ENCODE measurements at regions of chr6 and their contacts with region 1.

Region 1: GRCh38 chr6:39309942-39310531 is 4.2 kb downstream of the KCNK17 start:
- DNase-seq: peak; percentile 75
- H3K4me3 Mint-ChIP-seq: no peak overlapping the region
- H3K27ac Mint-ChIP-seq: no peak overlapping the region
- H3K4me1 Mint-ChIP-seq: peaks cover 7% of the 10 kb centered on the region
- H3K27me3 Mint-ChIP-seq: peaks cover 30% of the 10 kb centered on the region

Region 2: GRCh38 chr6:38997128-38997761 is 312.8 kb before region 1 on chr6:
- CTCF ChIA-PET with region 1: interaction called, 42 read pairs
- intact Hi-C with region 1: no loop called
- DNase-seq: peak; percentile 56
- H3K4me3 Mint-ChIP-seq: no peak overlapping the region
- H3K27ac Mint-ChIP-seq: no peak overlapping the region
- H3K4me1 Mint-ChIP-seq: no peaks in the 10 kb centered on the region
- H3K27me3 Mint-ChIP-seq: peaks cover 19% of the 10 kb centered on the region

Measured in activated naive CD4-positive, alpha-beta T cell treated with anti-CD3 and anti-CD28 coated beads for 36 hours (primary cell).